ENCODE measurements at regions of chr5 and their contacts with region 1.

Region 1: GRCh38 chr5:134225618-134226440 is at the start of gene PPP2CA:
- DNase-seq: peak; percentile 98 to 100 (median 99)
- ATAC-seq: peak; percentile 89
- H3K4me3 ChIP-seq: peak within 1 kb of the TSS; percentile 100
- H3K4me3 Mint-ChIP-seq: peak within 1 kb of the TSS; percentile 66 to 98 (median 96)
- H3K27ac ChIP-seq: peak within 1 kb of the TSS; percentile 100
- H3K27ac Mint-ChIP-seq: peak within 1 kb of the TSS; percentile 95 to 100 (median 98)
- H3K4me1 ChIP-seq: peaks cover 29 to 40% of the 10 kb centered on the region in 2 donors
- H3K4me1 Mint-ChIP-seq: peaks cover 37 to 58% (median 52%) of the 10 kb centered on the region in 7 donors
- H3K27me3 ChIP-seq: no peaks in the 10 kb centered on the region
- H3K27me3 Mint-ChIP-seq: peaks cover 0 to 4% (median 0%) of the 10 kb centered on the region in 5 donors
- total RNA-seq, gene PPP2CA: 89.5 to 168 (median 132) TPM

Region 2: GRCh38 chr5:132963175-132964104 is 1262.4 kb before region 1 on chr5 and contains the start of gene AFF4:
- CTCF ChIA-PET with region 1: no interaction called
- POLR2A ChIA-PET with region 1: no interaction called
- intact Hi-C with region 1: loop called in 1 of 2 experiments (anchors 5 kb)
- DNase-seq: peak; percentile 81 to 90 (median 85)
- ATAC-seq: peak; percentile 92
- H3K4me3 ChIP-seq: peak within 1 kb of the TSS; percentile 65
- H3K4me3 Mint-ChIP-seq: peak within 1 kb of the TSS; percentile 90 to 100 (median 98)
- H3K27ac ChIP-seq: peak within 1 kb of the TSS; percentile 94
- H3K27ac Mint-ChIP-seq: peak within 1 kb of the TSS; percentile 96 to 100 (median 98)
- H3K4me1 ChIP-seq: peaks cover 10 to 22% of the 10 kb centered on the region in 2 donors
- H3K4me1 Mint-ChIP-seq: peaks cover 26 to 52% (median 38%) of the 10 kb centered on the region in 7 donors
- H3K27me3 ChIP-seq: no peaks in the 10 kb centered on the region
- H3K27me3 Mint-ChIP-seq: no peaks in the 10 kb centered on the region
- total RNA-seq, gene AFF4: 39.7 to 82.3 (median 69.0) TPM

Region 3: GRCh38 chr5:133952729-133953567 is 272.9 kb before region 1 on chr5:
- CTCF ChIA-PET with region 1: no interaction called
- POLR2A ChIA-PET with region 1: no interaction called
- intact Hi-C with region 1: no loop called
- DNase-seq: no peak
- ATAC-seq: no peak
- H3K4me3 ChIP-seq: no peak overlapping the region
- H3K4me3 Mint-ChIP-seq: no peak overlapping the region
- H3K27ac ChIP-seq: no peak overlapping the region
- H3K27ac Mint-ChIP-seq: peak overlapping the region in 3 of 9 donors; percentile 25 to 87 (median 36)
- H3K4me1 ChIP-seq: no peaks in the 10 kb centered on the region
- H3K4me1 Mint-ChIP-seq: peaks cover 0 to 9% (median 7%) of the 10 kb centered on the region in 7 donors
- H3K27me3 ChIP-seq: no peaks in the 10 kb centered on the region
- H3K27me3 Mint-ChIP-seq: no peaks in the 10 kb centered on the region

Region 4: GRCh38 chr5:134113902-134114875 is 111.6 kb before region 1 on chr5 and contains the start of gene TCF7:
- CTCF ChIA-PET with region 1: no interaction called
- POLR2A ChIA-PET with region 1: interaction called, 8 read pairs
- intact Hi-C with region 1: loop called in 1 of 2 experiments (anchors 5 kb)
- DNase-seq: peak; percentile 69 to 87 (median 83)
- ATAC-seq: peak; percentile 89
- H3K4me3 ChIP-seq: peak within 1 kb of the TSS; percentile 93
- H3K4me3 Mint-ChIP-seq: peak within 1 kb of the TSS; percentile 93 to 100 (median 98)
- H3K27ac ChIP-seq: peak within 1 kb of the TSS; percentile 97
- H3K27ac Mint-ChIP-seq: peak within 1 kb of the TSS; percentile 88 to 99 (median 98)
- H3K4me1 ChIP-seq: peaks cover 34 to 63% of the 10 kb centered on the region in 2 donors
- H3K4me1 Mint-ChIP-seq: peaks cover 27 to 67% (median 31%) of the 10 kb centered on the region in 7 donors
- H3K27me3 ChIP-seq: no peaks in the 10 kb centered on the region
- H3K27me3 Mint-ChIP-seq: peaks cover 0 to 43% (median 0%) of the 10 kb centered on the region in 5 donors
- total RNA-seq, gene TCF7: 203 to 1,066 (median 643) TPM

Region 5: GRCh38 chr5:134209477-134210240 is 16.2 kb before region 1 on chr5:
- CTCF ChIA-PET with region 1: no interaction called
- POLR2A ChIA-PET with region 1: interaction called, 13 read pairs
- intact Hi-C with region 1: loop called in 1 of 2 experiments (anchors 2 kb)
- DNase-seq: no peak
- ATAC-seq: no peak
- H3K4me3 ChIP-seq: no peak overlapping the region
- H3K4me3 Mint-ChIP-seq: peak overlapping the region in 5 of 10 donors; percentile 27 to 48 (median 43)
- H3K27ac ChIP-seq: no peak overlapping the region
- H3K27ac Mint-ChIP-seq: peak overlapping the region in 6 of 9 donors; percentile 13 to 76 (median 28)
- H3K4me1 ChIP-seq: peaks cover 11 to 43% of the 10 kb centered on the region in 2 donors
- H3K4me1 Mint-ChIP-seq: peaks cover 42 to 80% (median 73%) of the 10 kb centered on the region in 7 donors
- H3K27me3 ChIP-seq: no peaks in the 10 kb centered on the region
- H3K27me3 Mint-ChIP-seq: no peaks in the 10 kb centered on the region

Region 6: GRCh38 chr5:134411546-134412266 is 185.9 kb after region 1 on chr5 and contains the start of gene CDKN2AIPNL:
- CTCF ChIA-PET with region 1: no interaction called
- POLR2A ChIA-PET with region 1: interaction called, 4 read pairs
- intact Hi-C with region 1: loop called (anchors 1 kb)
- DNase-seq: peak; percentile 83 to 93 (median 89)
- ATAC-seq: peak; percentile 100
- H3K4me3 ChIP-seq: peak within 1 kb of the TSS; percentile 82
- H3K4me3 Mint-ChIP-seq: peak within 1 kb of the TSS; percentile 86 to 96 (median 92)
- H3K27ac ChIP-seq: peak within 1 kb of the TSS; percentile 82
- H3K27ac Mint-ChIP-seq: peak within 1 kb of the TSS; percentile 63 to 93 (median 90)
- H3K4me1 ChIP-seq: peaks cover 16 to 23% of the 10 kb centered on the region in 2 donors
- H3K4me1 Mint-ChIP-seq: peaks cover 20 to 54% (median 38%) of the 10 kb centered on the region in 7 donors
- H3K27me3 ChIP-seq: no peaks in the 10 kb centered on the region
- H3K27me3 Mint-ChIP-seq: no peaks in the 10 kb centered on the region
- total RNA-seq, gene CDKN2AIPNL: 11.5 to 20.8 (median 16.8) TPM

Region 7: GRCh38 chr5:134561871-134562296 is 336.1 kb after region 1 on chr5:
- CTCF ChIA-PET with region 1: no interaction called
- POLR2A ChIA-PET with region 1: no interaction called
- intact Hi-C with region 1: no loop called
- DNase-seq: no peak
- ATAC-seq: no peak
- H3K4me3 ChIP-seq: no peak overlapping the region
- H3K4me3 Mint-ChIP-seq: no peak overlapping the region
- H3K27ac ChIP-seq: no peak overlapping the region
- H3K27ac Mint-ChIP-seq: peak overlapping the region in 3 of 9 donors; percentile 21 to 59 (median 57)
- H3K4me1 ChIP-seq: peaks cover 0 to 5% of the 10 kb centered on the region in 2 donors
- H3K4me1 Mint-ChIP-seq: peaks cover 1 to 10% (median 3%) of the 10 kb centered on the region in 7 donors
- H3K27me3 ChIP-seq: no peaks in the 10 kb centered on the region
- H3K27me3 Mint-ChIP-seq: no peaks in the 10 kb centered on the region

Region 8: DNA sequence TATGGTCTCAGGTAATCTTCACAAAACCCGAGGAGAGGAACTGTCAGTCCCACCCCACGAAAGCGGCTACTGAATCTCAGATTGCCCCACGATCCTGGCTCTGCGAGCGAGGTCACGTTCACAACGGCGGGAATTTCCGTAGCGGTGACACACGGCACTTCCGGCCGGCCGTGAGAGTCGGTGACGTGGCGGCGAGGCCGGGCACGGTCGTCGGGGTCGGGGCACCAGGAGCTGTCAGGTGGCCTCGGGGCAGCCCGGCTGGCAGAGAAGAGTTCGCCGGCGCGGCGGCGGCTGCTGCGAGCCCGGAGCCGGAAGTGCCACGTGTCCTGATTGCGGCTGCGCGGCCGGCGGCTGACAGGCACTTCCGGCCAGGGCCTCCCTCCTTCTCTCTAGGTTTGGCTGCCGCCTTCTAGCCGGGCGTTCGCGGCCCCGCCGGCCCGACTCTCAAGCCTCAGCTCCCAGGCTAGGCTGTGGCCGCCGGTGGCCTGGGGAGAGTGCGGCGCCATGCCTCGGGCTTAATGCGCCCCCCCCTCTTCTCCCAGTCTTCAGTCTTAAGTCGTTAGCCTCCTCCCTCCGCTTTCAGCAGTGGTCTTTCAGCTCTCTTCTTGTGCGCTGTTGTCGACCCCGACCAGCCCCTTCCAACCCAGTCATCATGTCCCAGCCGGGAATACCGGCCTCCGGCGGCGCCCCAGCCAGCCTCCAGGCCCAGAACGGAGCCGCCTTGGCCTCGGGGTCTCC is 422.8 kb after region 1 on chr5 and contains the start of gene SEC24A:
- CTCF ChIA-PET with region 1: no interaction called
- POLR2A ChIA-PET with region 1: no interaction called
- intact Hi-C with region 1: loop called (anchors 1 kb)
- DNase-seq: peak; percentile 83 to 93 (median 86)
- ATAC-seq: peak; percentile 92
- H3K4me3 ChIP-seq: peak within 1 kb of the TSS; percentile 76
- H3K4me3 Mint-ChIP-seq: peak within 1 kb of the TSS; percentile 89 to 100 (median 98)
- H3K27ac ChIP-seq: peak within 1 kb of the TSS; percentile 91
- H3K27ac Mint-ChIP-seq: peak within 1 kb of the TSS; percentile 94 to 100 (median 99)
- H3K4me1 ChIP-seq: peaks cover 7 to 9% of the 10 kb centered on the region in 2 donors
- H3K4me1 Mint-ChIP-seq: peaks cover 13 to 40% (median 26%) of the 10 kb centered on the region in 7 donors
- H3K27me3 ChIP-seq: no peaks in the 10 kb centered on the region
- H3K27me3 Mint-ChIP-seq: no peaks in the 10 kb centered on the region
- total RNA-seq, gene SEC24A: 13.6 to 30.9 (median 16.0) TPM

Region 9: DNA sequence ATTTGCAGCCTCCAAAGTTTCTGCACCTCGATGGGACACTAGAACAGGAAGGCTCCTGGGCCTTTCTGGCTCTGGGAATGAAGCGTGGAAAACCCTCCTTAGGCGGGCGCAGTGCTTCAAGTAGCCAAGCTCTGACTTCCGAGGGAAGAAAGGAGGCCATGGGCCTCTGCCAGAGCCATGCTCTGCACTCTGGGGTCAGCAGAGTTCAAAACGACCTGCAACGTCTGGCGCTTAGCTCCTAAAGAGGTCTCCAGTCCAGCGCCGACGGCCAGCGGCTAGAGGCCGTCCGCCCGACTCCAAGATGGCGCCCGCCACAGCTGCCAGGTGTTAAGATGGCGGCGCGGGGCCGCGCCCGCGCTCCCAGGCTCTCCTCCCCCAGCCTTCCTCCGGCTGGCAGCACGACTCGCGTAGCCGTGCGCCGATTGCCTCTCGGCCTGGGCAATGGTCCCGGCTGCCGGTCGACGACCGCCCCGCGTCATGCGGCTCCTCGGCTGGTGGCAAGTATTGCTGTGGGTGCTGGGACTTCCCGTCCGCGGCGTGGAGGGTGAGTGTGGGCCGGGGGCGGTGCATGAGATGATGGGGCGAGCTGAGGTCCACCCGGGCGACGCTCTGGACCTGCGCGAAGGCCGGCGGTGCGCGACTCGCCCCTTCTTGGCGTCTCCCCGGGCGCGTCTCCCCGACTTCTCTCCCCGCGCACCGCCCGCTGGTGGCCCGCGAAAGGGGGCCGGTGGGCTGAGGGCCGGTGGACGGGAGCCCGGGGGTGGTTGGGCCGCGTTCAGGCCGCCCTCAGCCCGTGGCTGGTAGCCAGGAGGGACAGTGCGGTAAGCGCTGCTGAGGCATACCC is 648.4 kb after region 1 on chr5 and contains the start of gene TXNDC15:
- CTCF ChIA-PET with region 1: no interaction called
- POLR2A ChIA-PET with region 1: interaction called, 3 read pairs
- intact Hi-C with region 1: loop called in 1 of 2 experiments (anchors 2 kb)
- DNase-seq: peak; percentile 69 to 86 (median 78)
- ATAC-seq: peak; percentile 98
- H3K4me3 ChIP-seq: peak within 1 kb of the TSS; percentile 95
- H3K4me3 Mint-ChIP-seq: peak within 1 kb of the TSS; percentile 89 to 98 (median 94)
- H3K27ac ChIP-seq: peak within 1 kb of the TSS; percentile 88
- H3K27ac Mint-ChIP-seq: peak within 1 kb of the TSS; percentile 91 to 97 (median 95)
- H3K4me1 ChIP-seq: peaks cover 16 to 32% of the 10 kb centered on the region in 2 donors
- H3K4me1 Mint-ChIP-seq: peaks cover 31 to 51% (median 45%) of the 10 kb centered on the region in 7 donors
- H3K27me3 ChIP-seq: no peaks in the 10 kb centered on the region
- H3K27me3 Mint-ChIP-seq: no peaks in the 10 kb centered on the region
- total RNA-seq, gene TXNDC15: 24.2 to 71.3 (median 36.8) TPM

Measured in naive thymus-derived CD4-positive, alpha-beta T cell (primary cell).